Left ventricle myocardium inferior (tissue), 1 donor: ENCODE measurements at regions of chr1 and their contacts with region 1.

Region 1: DNA sequence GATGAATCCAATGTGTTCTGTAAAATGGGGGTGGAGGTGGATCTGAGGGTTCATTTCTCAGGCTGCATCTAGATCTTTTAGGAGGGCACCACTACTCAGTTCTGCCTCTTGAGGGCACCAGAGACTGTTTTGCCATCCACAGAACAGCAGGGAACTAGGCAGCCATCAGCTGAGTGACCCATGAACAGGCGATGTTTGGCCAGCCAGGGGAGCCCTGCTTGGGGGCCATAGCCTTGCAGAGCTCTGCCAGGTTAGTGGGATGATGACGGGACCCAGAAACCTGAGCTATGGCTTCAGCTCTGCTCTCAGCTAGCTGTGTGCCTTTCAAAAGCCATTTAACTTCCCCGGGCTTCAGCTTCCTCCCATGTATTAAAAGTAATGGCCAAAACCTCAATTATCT is 13.4 kb upstream of the NOS1AP start:
- DNase-seq: peak; percentile 37
- H3K4me3 ChIP-seq: no peak overlapping the region
- H3K27ac ChIP-seq: no peak overlapping the region
- H3K4me1 ChIP-seq: peaks cover 5% of the 10 kb centered on the region
- H3K27me3 ChIP-seq: peaks cover 3% of the 10 kb centered on the region
- CTCF ChIP-seq: peak; percentile 90

Region 2: GRCh38 chr1:162019006-162019405 is 37.0 kb before region 1 on chr1:
- intact Hi-C with region 1: no loop called
- DNase-seq: no peak
- H3K4me3 ChIP-seq: no peak overlapping the region
- H3K27ac ChIP-seq: peak overlapping the region; percentile 66
- H3K4me1 ChIP-seq: peaks cover 45% of the 10 kb centered on the region
- H3K27me3 ChIP-seq: no peaks in the 10 kb centered on the region
- CTCF ChIP-seq: no peak

Region 3: DNA sequence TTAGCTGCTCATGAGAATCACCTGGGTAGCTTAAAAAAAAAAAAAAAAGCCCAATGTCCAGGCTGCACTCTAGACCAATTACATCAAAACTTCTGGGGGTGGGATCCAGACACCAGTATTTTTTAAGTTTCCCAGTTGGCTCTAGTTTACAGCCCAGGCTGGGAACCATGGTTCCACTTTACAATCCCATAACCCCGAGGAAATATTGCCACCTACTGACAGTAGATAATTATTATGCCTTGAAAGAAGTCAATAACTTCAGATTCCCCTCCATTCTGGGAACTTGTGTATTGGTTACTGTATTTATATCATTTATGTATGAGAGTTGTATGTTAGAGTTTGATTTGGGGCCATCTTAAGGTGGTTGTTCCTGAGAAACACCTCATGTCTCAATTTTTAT is 220.4 kb after region 1 on chr1:
- intact Hi-C with region 1: loop called (anchors 5 kb)
- DNase-seq: no peak
- H3K4me3 ChIP-seq: no peak overlapping the region
- H3K27ac ChIP-seq: no peak overlapping the region
- H3K4me1 ChIP-seq: peaks cover 10% of the 10 kb centered on the region
- H3K27me3 ChIP-seq: no peaks in the 10 kb centered on the region
- CTCF ChIP-seq: peak; percentile 51

Region 4: DNA sequence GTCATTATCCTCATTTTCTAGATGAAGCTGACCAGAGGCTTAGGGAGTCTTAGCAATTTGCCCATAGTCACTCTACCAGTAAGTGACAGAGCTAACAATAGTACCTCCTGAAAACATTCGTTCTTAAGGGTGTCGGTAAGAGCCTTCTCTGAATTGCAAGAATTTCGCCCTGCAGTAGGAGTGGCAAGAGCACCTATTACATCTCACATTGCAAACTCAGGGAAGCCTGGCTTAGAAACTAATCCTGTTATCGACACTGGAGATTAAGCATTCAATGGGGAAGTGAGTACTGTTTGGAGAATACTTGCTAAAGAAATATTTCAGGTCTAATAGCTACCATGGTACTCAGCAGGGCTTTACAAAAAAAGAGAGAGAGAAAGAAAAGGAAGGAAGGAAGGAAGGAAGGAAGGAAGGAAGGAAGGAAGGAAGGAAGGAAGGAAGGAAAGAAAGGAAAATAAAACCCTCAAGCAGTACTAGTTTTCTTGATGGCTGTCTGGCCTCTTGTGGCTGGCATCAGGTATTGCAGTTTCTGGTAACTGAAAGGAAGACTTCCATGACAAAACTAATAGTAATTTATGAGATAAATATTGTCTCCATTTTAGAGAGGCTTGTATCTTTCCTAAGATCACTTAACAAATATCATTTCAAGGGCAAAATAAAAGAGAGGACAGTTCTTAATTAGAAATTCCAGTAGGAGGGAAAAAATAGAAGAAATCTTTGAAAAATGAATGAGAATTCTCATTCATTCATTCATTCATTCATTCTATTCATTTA is 335.9 kb after region 1 on chr1:
- intact Hi-C with region 1: loop called (anchors 5 kb)
- DNase-seq: no peak
- H3K4me3 ChIP-seq: no peak overlapping the region
- H3K27ac ChIP-seq: no peak overlapping the region
- H3K4me1 ChIP-seq: no peaks in the 10 kb centered on the region
- H3K27me3 ChIP-seq: peaks cover 37% of the 10 kb centered on the region
- CTCF ChIP-seq: peak; percentile 81

Region 5: GRCh38 chr1:162596514-162597170 is 540.6 kb after region 1 on chr1:
- intact Hi-C with region 1: no loop called
- DNase-seq: no peak
- H3K4me3 ChIP-seq: no peak overlapping the region
- H3K27ac ChIP-seq: no peak overlapping the region
- H3K4me1 ChIP-seq: no peaks in the 10 kb centered on the region
- H3K27me3 ChIP-seq: no peaks in the 10 kb centered on the region
- CTCF ChIP-seq: no peak